ENCODE measurements at regions of chr18 and their contacts with region 1.

Region 1: DNA sequence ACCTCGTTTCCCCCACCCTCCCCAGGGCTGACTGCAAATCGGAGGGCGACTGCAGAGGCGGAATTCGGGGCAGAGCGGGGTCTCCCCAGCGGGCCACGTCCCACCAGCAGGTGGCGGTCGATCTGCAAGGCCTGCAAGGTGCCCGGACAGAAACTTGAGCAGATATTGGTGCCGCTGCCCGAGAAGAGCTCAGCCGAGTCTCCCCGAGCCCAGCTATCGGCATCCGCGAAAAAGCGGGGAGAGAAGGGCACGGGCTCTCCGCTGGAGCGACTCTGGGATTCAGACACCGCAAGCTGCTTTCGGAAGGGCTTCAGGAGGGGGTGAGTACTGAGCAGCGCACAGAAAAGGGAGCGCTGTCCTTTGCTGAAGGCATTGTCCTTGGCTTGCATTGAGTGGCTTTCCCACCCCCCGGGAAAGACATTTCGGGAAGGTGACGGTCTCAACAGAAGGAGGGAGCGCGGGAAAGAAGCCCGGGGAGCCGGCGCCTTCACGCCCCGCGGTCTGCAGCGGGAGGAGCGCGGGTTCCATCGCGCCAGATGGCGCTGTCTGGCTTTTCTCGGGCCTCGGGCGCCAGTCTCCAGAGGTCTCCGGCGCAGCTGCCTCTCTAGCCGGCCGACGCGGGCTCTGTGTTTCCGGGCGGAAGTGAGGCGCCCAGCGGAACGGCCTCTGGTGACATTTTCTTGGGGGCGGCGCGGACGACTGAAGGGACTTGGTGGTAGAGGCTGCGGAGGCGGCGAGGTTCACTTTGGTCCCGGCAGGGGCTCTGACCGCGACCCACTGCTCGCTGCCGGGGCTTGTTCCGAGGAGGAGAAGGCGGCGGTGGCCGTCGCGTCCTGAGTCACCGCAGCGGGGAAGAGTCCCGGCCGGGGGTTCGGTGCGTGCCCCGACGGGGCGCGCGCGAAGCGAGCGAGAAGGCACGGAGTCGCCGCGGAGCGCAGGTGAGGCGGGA is 69.5 kb downstream of the HAUS1 start:
- DNase-seq: peak; percentile 95

Region 2: DNA sequence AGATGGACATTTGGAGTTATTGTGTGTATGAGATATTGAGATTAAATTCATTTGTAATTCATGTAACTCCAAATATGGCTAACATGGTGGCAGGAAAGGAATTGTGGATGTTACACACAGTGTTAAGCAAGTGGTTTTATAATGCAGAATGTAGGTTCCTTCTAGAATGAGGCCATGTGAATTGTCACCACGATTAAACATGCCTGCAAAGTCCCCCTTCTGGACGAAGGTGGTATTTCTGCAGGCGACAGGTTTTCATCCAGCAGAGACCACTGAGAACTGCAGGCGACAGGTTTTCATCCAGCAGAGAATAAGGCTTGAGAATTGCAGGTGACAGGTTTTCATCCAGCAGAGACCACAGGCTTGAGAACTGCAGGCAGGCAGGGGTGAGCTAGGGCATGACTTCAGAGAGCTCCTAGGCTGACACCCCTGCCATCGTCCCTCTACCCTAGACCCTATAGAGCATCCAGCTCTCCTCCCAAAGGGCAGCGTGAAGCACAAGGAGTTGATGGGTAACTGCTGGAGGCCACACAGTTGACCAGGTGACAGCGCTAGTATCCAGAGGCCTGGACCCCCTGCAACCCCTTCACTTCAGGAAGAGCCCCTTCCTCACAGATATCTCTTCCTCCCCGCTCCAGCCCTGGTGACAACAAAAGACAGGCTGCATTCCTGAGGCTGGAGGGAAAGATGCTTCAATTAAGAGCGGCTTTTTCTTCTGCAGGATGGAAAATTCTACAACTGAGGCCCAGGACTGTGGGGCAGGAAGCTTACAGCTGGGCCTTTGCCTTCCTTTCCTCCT is 307.6 kb after region 1 on chr18:
- in situ Hi-C with region 1: loop called (anchors 25 kb)
- DNase-seq: peak; percentile 55

Region 3: DNA sequence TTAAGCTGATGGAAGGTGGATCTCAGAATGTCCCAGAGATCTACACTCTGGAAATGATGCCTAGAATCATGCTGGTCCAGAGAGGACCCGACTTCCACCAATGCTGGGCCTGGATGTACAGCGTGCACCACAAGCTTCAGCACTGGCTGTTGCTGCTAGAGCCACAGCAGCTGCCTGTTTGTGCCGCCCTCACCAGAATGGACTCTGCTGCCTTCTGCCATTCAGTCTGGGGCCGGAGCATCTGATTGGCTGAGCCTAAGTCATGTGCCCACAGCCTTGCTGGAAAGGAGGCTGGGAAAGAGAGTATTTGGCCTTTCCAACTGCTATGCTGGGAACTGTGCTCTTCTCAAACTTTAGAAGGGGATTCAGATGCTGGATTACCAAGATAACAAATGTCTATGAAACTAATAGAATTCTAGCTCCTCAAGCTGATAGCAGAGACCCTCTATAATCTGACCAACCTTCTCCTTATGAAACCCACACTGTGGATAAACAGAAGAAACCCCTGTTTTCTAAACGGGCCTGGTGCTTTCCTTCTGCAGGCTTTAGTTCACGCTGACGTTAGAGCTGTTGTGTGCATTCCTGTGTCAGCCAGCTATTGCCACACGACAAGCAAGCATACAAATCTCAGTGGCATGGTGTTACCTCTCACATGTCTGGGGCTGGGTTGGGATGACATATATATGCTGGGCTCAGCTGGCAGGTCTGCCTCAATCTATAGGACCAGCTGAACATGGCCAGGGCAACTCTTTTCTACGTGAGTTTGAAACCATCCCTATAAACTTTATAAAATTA is 487.5 kb after region 1 on chr18:
- in situ Hi-C with region 1: loop called (anchors 25 kb)
- DNase-seq: no peak

Measured in KBM-7 (cell line).